ENCODE measurements at regions of chr9 and their contacts with region 1.

Region 1: GRCh38 chr9:122464633-122465567 is 12.8 kb downstream of the OR1J1 start:
- DNase-seq: peak; percentile 80 to 91 (median 87)
- H3K4me3 ChIP-seq: peak overlapping the region in 3 of 4 donors; percentile 2 to 62 (median 27)
- H3K27ac ChIP-seq: no peak overlapping the region
- H3K4me1 ChIP-seq: peaks cover 0 to 6% of the 10 kb centered on the region in 2 donors
- H3K27me3 ChIP-seq: no peaks in the 10 kb centered on the region
- CTCF ChIP-seq: peak; percentile 75 to 91 (median 85)
- POLR2A ChIP-seq: no peak

Region 2: GRCh38 chr9:122518226-122518625 is 53.3 kb after region 1 on chr9:
- intact Hi-C with region 1: no loop called
- DNase-seq: no peak
- H3K4me3 ChIP-seq: no peak overlapping the region
- H3K27ac ChIP-seq: no peak overlapping the region
- H3K4me1 ChIP-seq: no peaks in the 10 kb centered on the region
- H3K27me3 ChIP-seq: peaks cover 10% of the 10 kb centered on the region
- CTCF ChIP-seq: no peak
- POLR2A ChIP-seq: no peak

Region 3: GRCh38 chr9:122810306-122810946 is 345.5 kb after region 1 on chr9:
- intact Hi-C with region 1: loop called (anchors 2 to 10 kb)
- DNase-seq: peak; percentile 55 to 90 (median 70)
- H3K4me3 ChIP-seq: no peak overlapping the region
- H3K27ac ChIP-seq: no peak overlapping the region
- H3K4me1 ChIP-seq: no peaks in the 10 kb centered on the region
- H3K27me3 ChIP-seq: no peaks in the 10 kb centered on the region
- CTCF ChIP-seq: peak; percentile 58 to 95 (median 84)
- POLR2A ChIP-seq: no peak